ENCODE measurements at regions of chr3 and their contacts with region 1.

Region 1: GRCh38 chr3:174440741-174441587 is 418.2 kb upstream of the NAALADL2 start:
- DNase-seq: peak; percentile 92
- H3K4me3 Mint-ChIP-seq: no peak overlapping the region
- H3K27ac Mint-ChIP-seq: no peak overlapping the region
- H3K4me1 Mint-ChIP-seq: peaks cover 10% of the 10 kb centered on the region
- H3K27me3 Mint-ChIP-seq: no peaks in the 10 kb centered on the region
- CTCF ChIP-seq: no peak

Region 2: GRCh38 chr3:174951023-174951422 is 510.1 kb after region 1 on chr3:
- CTCF ChIA-PET with region 1: interaction called, 3 read pairs
- POLR2A ChIA-PET with region 1: interaction called, 5 read pairs
- intact Hi-C with region 1: loop called (anchors 2 kb)
- DNase-seq: peak; percentile 66
- H3K4me3 Mint-ChIP-seq: no peak overlapping the region
- H3K27ac Mint-ChIP-seq: peak overlapping the region; percentile 70
- H3K4me1 Mint-ChIP-seq: peaks cover 41% of the 10 kb centered on the region
- H3K27me3 Mint-ChIP-seq: no peaks in the 10 kb centered on the region
- CTCF ChIP-seq: no peak

Region 3: DNA sequence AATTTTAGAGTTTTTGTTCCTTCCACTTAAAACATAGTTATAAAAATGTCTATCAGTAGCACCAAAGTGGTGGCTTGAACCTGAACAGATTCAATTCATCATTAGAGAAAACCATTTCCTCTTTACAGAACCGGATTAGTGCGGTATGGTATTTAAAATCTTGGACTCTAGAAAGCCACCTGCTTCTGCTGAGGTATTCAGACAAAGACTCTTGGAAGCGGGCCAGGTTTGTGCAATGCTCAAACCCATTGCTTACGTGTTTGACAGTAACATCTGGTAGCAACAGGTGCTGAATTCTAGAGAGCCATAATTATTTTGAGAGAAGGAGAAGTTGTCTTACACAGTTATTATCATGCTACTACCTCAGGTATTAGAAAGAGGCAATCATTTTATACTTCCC is 708.7 kb after region 1 on chr3:
- CTCF ChIA-PET with region 1: interaction called, 3 read pairs
- POLR2A ChIA-PET with region 1: interaction called, 3 read pairs
- intact Hi-C with region 1: loop called (anchors 5 kb)
- DNase-seq: peak; percentile 95
- H3K4me3 Mint-ChIP-seq: no peak overlapping the region
- H3K27ac Mint-ChIP-seq: no peak overlapping the region
- H3K4me1 Mint-ChIP-seq: peaks cover 16% of the 10 kb centered on the region
- H3K27me3 Mint-ChIP-seq: no peaks in the 10 kb centered on the region
- CTCF ChIP-seq: no peak